ENCODE measurements at regions of chr2 and their contacts with region 1.

Region 1: GRCh38 chr2:85635636-85636035 is 19.6 kb downstream of the USP39 start:
- DNase-seq: no peak

Region 2: GRCh38 chr2:85707304-85707703 is 71.7 kb after region 1 on chr2:
- intact Hi-C with region 1: loop called (anchors 5 kb)
- DNase-seq: no peak

Region 3: DNA sequence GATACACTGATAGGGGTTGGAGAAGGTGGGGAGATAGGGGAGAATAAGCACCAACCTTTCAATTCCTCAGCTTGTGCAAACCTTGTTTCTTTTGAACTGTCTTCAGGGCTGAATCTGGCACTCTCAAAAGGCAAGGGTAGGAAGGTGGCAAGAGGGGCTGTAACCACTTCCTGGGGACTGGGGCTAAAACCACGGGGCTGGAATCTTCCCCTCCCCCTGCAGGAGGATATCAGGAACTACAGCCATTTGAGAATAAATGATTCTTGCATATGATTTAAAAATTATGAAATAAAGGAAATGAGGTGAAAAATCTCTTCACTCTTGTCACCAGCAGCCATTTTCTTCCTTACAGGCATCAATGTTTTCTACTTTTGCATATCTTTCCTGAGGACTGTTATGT is 168.9 kb after region 1 on chr2:
- intact Hi-C with region 1: loop called in 1 of 2 experiments (anchors 10 kb)
- DNase-seq: no peak

Region 4: GRCh38 chr2:85813982-85814801 is 178.6 kb after region 1 on chr2:
- intact Hi-C with region 1: loop called (anchors 5 to 10 kb)
- DNase-seq: peak; percentile 97

Region 5: GRCh38 chr2:86290596-86291327 is 655.1 kb after region 1 on chr2:
- intact Hi-C with region 1: no loop called
- DNase-seq: no peak